ENCODE measurements at regions of chr6 and their contacts with region 1.

Region 1: DNA sequence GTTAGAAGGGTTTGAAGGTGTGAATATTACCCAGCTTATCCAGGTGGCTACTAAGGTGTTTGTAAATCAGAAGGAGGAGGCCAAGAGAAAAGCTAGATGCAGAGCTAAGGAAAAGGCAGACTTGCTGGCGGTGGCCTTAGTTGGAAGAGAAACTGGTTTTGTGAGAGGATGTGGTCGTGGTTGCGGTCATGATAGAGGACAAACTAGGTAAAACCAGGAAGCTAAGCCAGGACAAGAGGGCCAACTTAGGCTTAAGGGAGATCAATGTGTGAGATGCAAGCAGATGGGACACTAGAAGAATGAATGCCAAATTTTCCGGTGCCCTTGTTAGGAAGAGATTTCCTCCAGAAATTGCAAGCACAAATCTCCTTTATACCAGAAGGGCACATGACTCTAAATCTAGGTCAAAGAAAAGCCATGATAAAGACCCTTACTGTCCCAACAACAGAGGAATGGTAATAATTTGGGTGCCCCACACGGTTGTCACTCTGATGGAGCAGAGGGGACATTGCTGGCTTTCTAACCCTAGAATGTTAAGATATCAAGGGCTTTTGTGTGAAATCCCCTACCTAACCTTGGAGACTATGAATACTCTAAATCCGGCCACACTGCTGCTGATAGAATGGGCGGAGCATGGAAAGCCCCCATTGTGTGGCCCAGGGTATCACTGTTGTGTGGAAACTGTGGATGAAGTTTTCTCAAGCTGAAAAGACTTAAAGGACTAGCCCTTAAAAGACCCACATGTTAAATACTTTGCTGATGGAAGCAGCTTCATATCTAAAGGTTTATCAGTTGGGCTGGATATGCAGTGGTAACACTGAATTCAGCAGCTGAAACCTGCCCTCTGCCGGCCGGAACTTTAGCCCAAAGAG is 7.8 kb downstream of the IL22RA2 start:
- DNase-seq: peak; percentile 24
- CTCF ChIP-seq: peak; percentile 71

Region 2: DNA sequence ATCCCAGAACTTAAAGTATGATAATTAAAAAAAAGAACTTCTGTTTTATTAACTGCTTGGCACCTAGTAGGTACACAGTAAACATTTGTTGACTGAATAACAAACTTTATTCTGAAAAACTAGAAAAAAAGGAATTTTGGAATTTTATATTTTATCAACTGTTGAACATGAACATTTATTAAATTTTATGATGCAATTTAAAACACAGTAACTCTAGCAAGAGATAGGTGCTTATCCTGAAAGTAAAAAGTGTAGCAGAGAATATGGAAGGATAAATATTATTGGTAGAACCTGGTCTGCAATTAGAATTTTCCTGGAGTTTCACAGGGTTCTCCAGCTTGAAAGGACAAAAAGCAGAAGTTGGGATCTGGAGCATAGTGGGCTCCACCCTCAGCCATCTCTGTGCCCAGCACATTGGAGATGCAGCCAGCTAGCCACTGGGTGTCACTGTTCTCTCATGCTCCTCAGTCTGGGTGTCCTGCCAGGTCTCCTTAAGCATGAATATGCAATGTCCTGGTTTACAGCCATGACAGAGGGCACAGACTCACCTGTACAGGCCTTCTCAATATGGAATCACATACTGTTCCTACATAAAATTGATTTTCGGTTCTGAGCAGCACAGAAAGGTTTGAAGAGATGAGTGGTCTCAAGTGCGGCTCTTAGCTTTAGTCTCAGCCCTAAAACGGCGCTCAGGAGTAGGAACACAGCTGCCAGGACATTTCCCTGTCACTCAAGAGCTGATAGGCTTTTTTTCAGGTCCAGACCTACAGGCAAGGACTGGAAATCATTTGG is 89.1 kb before region 1 on chr6:
- CTCF ChIA-PET with region 1: interaction called, 35 read pairs
- POLR2A ChIA-PET with region 1: no interaction called
- DNase-seq: peak; percentile 70
- CTCF ChIP-seq: peak; percentile 89

Region 3: GRCh38 chr6:137089305-137089704 is 76.3 kb before region 1 on chr6:
- CTCF ChIA-PET with region 1: interaction called, 155 read pairs
- POLR2A ChIA-PET with region 1: no interaction called
- DNase-seq: no peak
- CTCF ChIP-seq: no peak

Region 4: DNA sequence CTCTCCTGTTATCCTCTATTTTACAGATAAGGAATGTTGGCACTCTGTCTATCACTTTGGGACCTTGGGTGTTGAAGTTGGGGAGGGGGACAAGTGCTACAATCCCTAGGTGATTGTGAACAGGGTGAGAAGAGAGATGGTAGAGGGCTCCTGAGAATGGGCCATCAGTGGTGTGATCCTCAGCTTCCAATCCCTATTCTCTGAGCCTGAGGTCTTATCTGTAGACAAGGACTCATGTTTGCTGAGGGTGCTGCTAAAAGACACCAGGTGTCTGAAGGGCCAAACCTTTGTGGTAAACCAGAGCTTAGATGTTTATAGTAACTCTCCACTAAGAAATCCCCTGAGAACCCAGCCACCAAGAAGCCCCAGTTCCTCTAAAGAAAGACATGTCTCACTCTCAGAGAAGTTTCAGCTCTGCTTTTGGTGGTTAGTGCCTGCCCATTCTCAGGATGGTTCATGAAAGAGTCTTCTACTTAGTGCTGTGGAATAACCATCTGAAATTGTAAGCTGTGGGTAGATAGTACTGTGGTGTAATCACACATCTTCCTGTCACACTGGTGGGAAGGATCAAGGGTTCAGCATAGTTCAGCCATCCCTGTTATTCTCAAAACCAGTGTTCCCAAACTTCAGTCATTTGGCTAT is 62.6 kb before region 1 on chr6:
- CTCF ChIA-PET with region 1: interaction called, 155 read pairs
- POLR2A ChIA-PET with region 1: no interaction called
- DNase-seq: peak; percentile 70
- CTCF ChIP-seq: no peak

Region 5: DNA sequence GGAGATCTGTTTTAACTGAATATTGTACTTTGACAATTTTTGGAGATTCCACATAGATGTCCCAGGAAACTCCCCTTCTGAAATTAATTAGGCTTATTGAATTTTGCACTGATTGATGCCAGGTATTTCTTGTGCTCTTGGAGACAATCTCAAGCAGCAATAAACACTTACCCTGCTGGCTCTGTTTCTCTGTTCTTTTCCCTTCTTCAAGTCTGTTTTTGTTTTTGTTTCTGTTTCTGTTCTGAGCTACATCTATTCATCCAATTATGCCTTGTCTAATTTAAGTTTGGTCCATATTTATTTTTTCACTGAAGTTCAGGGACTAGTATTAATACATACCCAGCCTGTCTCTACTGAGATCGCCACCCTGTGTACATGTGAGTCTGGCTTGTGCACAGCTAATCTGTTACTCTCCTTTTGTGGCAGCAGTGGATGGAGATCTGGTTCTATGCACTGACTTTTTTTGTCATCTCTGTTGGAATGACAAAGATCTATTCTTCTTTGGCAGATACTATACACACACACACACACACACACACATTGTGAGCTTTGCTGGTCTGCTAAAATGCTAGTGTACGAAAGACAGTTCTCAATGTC is 44.1 kb before region 1 on chr6:
- CTCF ChIA-PET with region 1: interaction called, 21 read pairs
- POLR2A ChIA-PET with region 1: no interaction called
- DNase-seq: no peak
- CTCF ChIP-seq: peak; percentile 14

Region 6: DNA sequence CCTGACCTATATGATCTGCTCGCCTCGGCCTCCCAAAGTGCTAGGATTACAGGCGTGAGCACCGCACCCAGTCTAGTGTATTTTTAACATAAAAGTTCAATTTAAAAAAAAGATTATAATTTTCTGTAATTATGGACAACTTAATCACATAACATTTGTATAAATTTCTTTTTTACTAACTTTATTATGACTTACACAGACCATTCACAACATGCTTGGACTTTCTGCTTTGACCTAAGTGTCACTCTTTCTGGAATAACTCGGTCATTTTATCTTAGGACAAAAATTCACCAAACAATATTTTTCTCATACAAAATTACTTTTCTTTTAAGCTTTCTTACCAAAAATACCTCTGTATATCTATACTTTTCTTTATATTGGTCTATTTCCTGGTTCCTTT is 23.2 kb after region 1 on chr6:
- CTCF ChIA-PET with region 1: interaction called, 17 read pairs
- POLR2A ChIA-PET with region 1: no interaction called
- DNase-seq: no peak
- CTCF ChIP-seq: no peak